Mammary epithelial cell (primary cell): ENCODE measurements at regions of chr11 and their contacts with region 1.

Region 1: DNA sequence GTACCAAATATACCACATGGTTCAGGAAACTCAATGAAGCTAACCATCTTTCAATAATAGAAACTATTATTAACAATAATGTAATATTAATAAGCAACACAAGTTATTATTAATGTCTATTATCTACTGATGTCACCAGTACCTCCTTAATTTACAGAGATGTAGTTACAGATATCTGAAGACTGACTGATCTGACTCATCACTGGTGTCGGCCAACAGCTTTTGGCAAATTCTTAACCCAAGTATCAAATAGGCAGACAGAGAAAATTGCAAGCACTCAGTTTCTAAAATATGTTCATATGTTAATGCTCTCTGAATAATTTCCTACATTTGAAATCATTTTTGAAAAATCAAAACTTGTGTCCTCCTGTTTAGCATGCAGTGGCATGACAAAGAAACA is 100.4 kb upstream of the DDI1 start:
- DNase-seq: no peak
- H3K4me3 ChIP-seq: no peak overlapping the region
- H3K27ac ChIP-seq: no peak overlapping the region
- H3K4me1 ChIP-seq: peaks cover 15% of the 10 kb centered on the region
- H3K27me3 ChIP-seq: no peaks in the 10 kb centered on the region
- CTCF ChIP-seq: no peak

Region 2: GRCh38 chr11:104151404-104152204 is 215.5 kb after region 1 on chr11:
- CTCF ChIA-PET with region 1: no interaction called
- dilution Hi-C with region 1: no loop called
- in situ Hi-C with region 1: loop called in 1 of 2 experiments (anchors 10 kb)
- intact Hi-C with region 1: no loop called
- DNase-seq: no peak
- H3K4me3 ChIP-seq: no peak overlapping the region
- H3K27ac ChIP-seq: no peak overlapping the region
- H3K4me1 ChIP-seq: no peaks in the 10 kb centered on the region
- H3K27me3 ChIP-seq: no peaks in the 10 kb centered on the region
- CTCF ChIP-seq: peak; percentile 44